CD8-positive, alpha-beta memory T cell (primary cell): ENCODE measurements at regions of chr10 and their contacts with region 1.

Region 1: GRCh38 chr10:88835096-88835909 is 16.3 kb downstream of the ANKRD22 start:
- DNase-seq: peak; percentile 75 to 91 (median 75)
- H3K4me3 ChIP-seq: no peak overlapping the region
- H3K4me3 Mint-ChIP-seq: no peak overlapping the region
- H3K27ac ChIP-seq: no peak overlapping the region
- H3K27ac Mint-ChIP-seq: no peak overlapping the region
- H3K4me1 ChIP-seq: peaks cover 38% of the 10 kb centered on the region
- H3K4me1 Mint-ChIP-seq: peaks cover 32 to 36% (median 36%) of the 10 kb centered on the region in 3 donors
- H3K27me3 ChIP-seq: no peaks in the 10 kb centered on the region
- H3K27me3 Mint-ChIP-seq: no peaks in the 10 kb centered on the region

Region 2: GRCh38 chr10:88810196-88810961 is 24.9 kb before region 1 on chr10:
- CTCF ChIA-PET with region 1: interaction called, 33 read pairs
- POLR2A ChIA-PET with region 1: no interaction called
- DNase-seq: peak in 4 of 5 donors; percentile 7 to 56 (median 28)
- H3K4me3 ChIP-seq: no peak overlapping the region
- H3K4me3 Mint-ChIP-seq: no peak overlapping the region
- H3K27ac ChIP-seq: no peak overlapping the region
- H3K27ac Mint-ChIP-seq: peak overlapping the region in 2 of 8 donors; percentile 60 to 83
- H3K4me1 ChIP-seq: peaks cover 17% of the 10 kb centered on the region
- H3K4me1 Mint-ChIP-seq: peaks cover 10 to 18% (median 18%) of the 10 kb centered on the region in 3 donors
- H3K27me3 ChIP-seq: no peaks in the 10 kb centered on the region
- H3K27me3 Mint-ChIP-seq: no peaks in the 10 kb centered on the region

Region 3: DNA sequence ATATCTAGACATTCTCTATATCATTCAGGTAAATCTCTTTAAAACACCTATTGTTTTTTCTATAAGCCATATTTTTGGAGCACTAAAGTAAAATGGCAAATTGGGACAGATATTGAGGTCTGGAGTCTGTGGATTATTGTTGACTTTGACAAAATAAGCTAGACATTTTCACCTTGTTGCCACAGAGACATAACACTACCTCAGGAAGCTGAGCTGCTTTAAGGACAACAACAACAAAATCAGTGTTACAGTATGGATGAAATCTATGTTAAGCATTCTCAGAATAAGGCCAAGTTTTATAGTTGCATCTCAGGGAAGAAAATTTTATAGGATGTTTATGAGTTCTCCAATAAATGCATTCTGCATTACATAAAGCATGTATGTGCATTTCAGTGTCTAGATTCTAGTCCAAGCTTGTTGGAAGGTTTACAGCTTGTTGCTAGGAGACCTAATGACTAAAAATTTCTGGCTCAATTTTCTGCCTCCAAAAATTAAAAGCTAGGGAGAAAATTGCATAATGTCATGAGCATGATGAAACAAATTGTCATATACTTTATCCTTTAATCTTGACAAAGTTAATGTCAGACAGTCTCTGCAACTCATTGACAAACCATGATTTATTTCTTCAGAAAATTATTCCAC is 14.4 kb before region 1 on chr10:
- CTCF ChIA-PET with region 1: interaction called, 27 read pairs
- POLR2A ChIA-PET with region 1: interaction called, 3 read pairs
- DNase-seq: no peak
- H3K4me3 ChIP-seq: no peak overlapping the region
- H3K4me3 Mint-ChIP-seq: no peak overlapping the region
- H3K27ac ChIP-seq: no peak overlapping the region
- H3K27ac Mint-ChIP-seq: peak overlapping the region in 2 of 8 donors; percentile 6 to 36
- H3K4me1 ChIP-seq: peaks cover 33% of the 10 kb centered on the region
- H3K4me1 Mint-ChIP-seq: peaks cover 36 to 72% (median 63%) of the 10 kb centered on the region in 3 donors
- H3K27me3 ChIP-seq: no peaks in the 10 kb centered on the region
- H3K27me3 Mint-ChIP-seq: no peaks in the 10 kb centered on the region

Region 4: DNA sequence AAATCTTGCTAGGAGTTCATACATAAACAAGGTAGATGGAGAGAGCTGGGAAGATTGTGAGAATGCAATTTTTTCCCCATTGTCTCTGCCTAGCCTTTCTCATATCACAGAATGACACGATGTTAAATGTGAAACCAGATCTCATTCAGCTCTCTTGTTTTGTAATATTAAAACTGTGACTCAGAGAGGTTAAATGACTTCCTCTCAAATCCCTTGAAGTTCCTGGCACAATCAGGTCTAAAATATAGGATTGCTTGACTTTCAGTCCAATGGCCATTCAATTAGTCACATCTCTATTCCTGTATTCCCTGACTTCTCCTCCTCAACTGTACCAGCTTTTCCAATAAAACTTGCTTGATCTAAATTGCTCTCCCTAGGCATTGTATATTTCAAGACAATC is 13.2 kb after region 1 on chr10:
- CTCF ChIA-PET with region 1: interaction called, 38 read pairs
- POLR2A ChIA-PET with region 1: no interaction called
- DNase-seq: no peak
- H3K4me3 ChIP-seq: no peak overlapping the region
- H3K4me3 Mint-ChIP-seq: no peak overlapping the region
- H3K27ac ChIP-seq: no peak overlapping the region
- H3K27ac Mint-ChIP-seq: no peak overlapping the region
- H3K4me1 ChIP-seq: no peaks in the 10 kb centered on the region
- H3K4me1 Mint-ChIP-seq: peaks cover 0 to 9% (median 4%) of the 10 kb centered on the region in 3 donors
- H3K27me3 ChIP-seq: no peaks in the 10 kb centered on the region
- H3K27me3 Mint-ChIP-seq: peaks cover 6 to 10% of the 10 kb centered on the region in 2 donors

Region 5: GRCh38 chr10:88865281-88865876 is 30.1 kb after region 1 on chr10:
- CTCF ChIA-PET with region 1: interaction called, 14 read pairs
- POLR2A ChIA-PET with region 1: no interaction called
- DNase-seq: no peak
- H3K4me3 ChIP-seq: no peak overlapping the region
- H3K4me3 Mint-ChIP-seq: no peak overlapping the region
- H3K27ac ChIP-seq: no peak overlapping the region
- H3K27ac Mint-ChIP-seq: no peak overlapping the region
- H3K4me1 ChIP-seq: no peaks in the 10 kb centered on the region
- H3K4me1 Mint-ChIP-seq: no peaks in the 10 kb centered on the region
- H3K27me3 ChIP-seq: no peaks in the 10 kb centered on the region
- H3K27me3 Mint-ChIP-seq: peaks cover 6 to 17% of the 10 kb centered on the region in 2 donors

Region 6: GRCh38 chr10:88880282-88881076 is 45.2 kb after region 1 on chr10:
- CTCF ChIA-PET with region 1: interaction called, 19 read pairs
- POLR2A ChIA-PET with region 1: interaction called, 10 read pairs
- DNase-seq: peak; percentile 54 to 81 (median 73)
- H3K4me3 ChIP-seq: peak overlapping the region; percentile 74
- H3K4me3 Mint-ChIP-seq: peak overlapping the region; percentile 93 to 100 (median 98)
- H3K27ac ChIP-seq: peak overlapping the region; percentile 80
- H3K27ac Mint-ChIP-seq: peak overlapping the region; percentile 79 to 99 (median 96)
- H3K4me1 ChIP-seq: peaks cover 58% of the 10 kb centered on the region
- H3K4me1 Mint-ChIP-seq: peaks cover 57 to 67% (median 63%) of the 10 kb centered on the region in 3 donors
- H3K27me3 ChIP-seq: no peaks in the 10 kb centered on the region
- H3K27me3 Mint-ChIP-seq: no peaks in the 10 kb centered on the region